ENCODE measurements at regions of chr1 and their contacts with region 1.

Region 1: GRCh38 chr1:162023547-162024501 is at the start of gene OLFML2B:
- DNase-seq: peak; percentile 55
- H3K4me3 ChIP-seq: peak within 1 kb of the TSS; percentile 53
- H3K27me3 ChIP-seq: no peaks in the 10 kb centered on the region; the same call in 1 of the 2 replicates
- CTCF ChIP-seq: peak; percentile 51
- polyA plus RNA-seq, gene OLFML2B: 1.6 and 3.5 TPM in 2 replicates

Region 2: GRCh38 chr1:161399257-161399998 is 624.4 kb before region 1 on chr1:
- CTCF ChIA-PET with region 1: no interaction called
- POLR2A ChIA-PET with region 1: no interaction called
- DNase-seq: peak; percentile 52
- H3K4me3 ChIP-seq: peak overlapping the region; percentile 76
- H3K27me3 ChIP-seq: peaks cover 3% of the 10 kb centered on the region; the same call in 1 of the 2 replicates
- CTCF ChIP-seq: peak; percentile 54

Region 3: GRCh38 chr1:161549652-161550051 is 474.2 kb before region 1 on chr1 and contains the start of gene FCGR3A:
- CTCF ChIA-PET with region 1: no interaction called
- POLR2A ChIA-PET with region 1: no interaction called
- DNase-seq: no peak
- H3K4me3 ChIP-seq: no peak within 1 kb of the TSS
- H3K27me3 ChIP-seq: no peaks in the 10 kb centered on the region
- CTCF ChIP-seq: no peak
- polyA plus RNA-seq, gene FCGR3A: not detected in 2 replicates

Region 4: GRCh38 chr1:161864577-161864976 is 159.2 kb before region 1 on chr1:
- CTCF ChIA-PET with region 1: interaction called, 26 read pairs
- POLR2A ChIA-PET with region 1: no interaction called
- DNase-seq: no peak
- H3K4me3 ChIP-seq: no peak overlapping the region
- H3K27me3 ChIP-seq: no peaks in the 10 kb centered on the region
- CTCF ChIP-seq: peak; percentile 55

Measured in BJ (cell line).